Sciatic nerve (tissue), 2 donors: ENCODE measurements at regions of chr10 and their contacts with region 1.

Region 1: DNA sequence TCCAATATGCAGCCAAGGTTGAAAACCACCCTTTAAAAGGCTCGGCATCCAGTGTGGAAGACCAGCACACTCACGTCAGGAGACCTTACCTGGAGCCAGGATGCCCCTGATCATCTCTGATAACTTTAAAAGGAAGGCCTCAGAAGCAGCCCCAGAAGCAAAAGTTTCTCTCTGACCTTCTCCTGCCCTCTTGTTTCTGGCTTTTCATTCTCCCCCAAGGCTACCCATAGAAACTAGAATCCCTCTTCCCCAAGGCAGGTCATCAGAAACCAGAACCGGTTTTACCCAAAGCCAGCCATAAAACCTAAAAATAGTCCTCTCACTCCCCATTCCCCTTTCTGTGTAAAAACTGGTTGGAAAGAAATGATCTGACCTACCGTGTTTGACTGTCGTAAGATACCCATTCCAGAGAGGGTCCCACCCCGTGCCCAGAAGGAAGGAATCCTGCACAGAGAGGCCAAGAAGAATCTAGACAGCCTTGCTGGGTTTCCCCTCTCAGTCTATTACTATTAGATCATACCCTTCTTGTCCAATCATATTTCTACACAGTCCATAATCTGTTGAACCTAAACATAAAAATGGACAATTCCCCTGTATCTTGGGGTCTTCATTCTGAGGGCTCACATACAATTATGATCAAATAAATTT is 17.5 kb upstream of the TSPAN14 start:
- DNase-seq: no peak
- ATAC-seq: no peak

Region 2: GRCh38 chr10:80382989-80383388 is 53.6 kb before region 1 on chr10:
- intact Hi-C with region 1: loop called (anchors 10 kb)
- DNase-seq: no peak
- ATAC-seq: peak; percentile 32

Region 3: GRCh38 chr10:80397014-80397413 is 39.6 kb before region 1 on chr10:
- intact Hi-C with region 1: no loop called
- DNase-seq: no peak
- ATAC-seq: no peak

Region 4: GRCh38 chr10:82242778-82243177 is 1806.2 kb after region 1 on chr10:
- intact Hi-C with region 1: no loop called
- DNase-seq: no peak
- ATAC-seq: no peak